CD14-positive monocyte (primary cell): ENCODE measurements at regions of chr3 and their contacts with region 1.

Region 1: GRCh38 chr3:5426094-5426883 is 238.8 kb downstream of the EDEM1 start:
- DNase-seq: peak; percentile 62 to 78 (median 75)
- H3K4me3 ChIP-seq: peak overlapping the region in 1 of 3 experiments; percentile 40
- H3K4me3 Mint-ChIP-seq: peak overlapping the region; percentile 25 to 70
- H3K27ac ChIP-seq: no peak overlapping the region
- H3K27ac Mint-ChIP-seq: peak overlapping the region in 6 of 7 donors; percentile 11 to 54 (median 31)
- H3K4me1 ChIP-seq: peaks cover 59 to 66% of the 10 kb centered on the region in 2 donors
- H3K4me1 Mint-ChIP-seq: peaks cover 70% of the 10 kb centered on the region
- H3K27me3 ChIP-seq: no peaks in the 10 kb centered on the region
- H3K27me3 Mint-ChIP-seq: peaks cover 2% of the 10 kb centered on the region in 3 donors
- CTCF ChIP-seq: peak; percentile 93

Region 2: GRCh38 chr3:5463991-5464390 is 37.7 kb after region 1 on chr3:
- intact Hi-C with region 1: loop called (anchors 5 kb)
- DNase-seq: peak; percentile 66 to 73 (median 72)
- H3K4me3 ChIP-seq: peak overlapping the region in 1 of 3 experiments; percentile 49
- H3K4me3 Mint-ChIP-seq: peak overlapping the region; percentile 22 to 75
- H3K27ac ChIP-seq: peak overlapping the region in 1 of 2 donors; percentile 79
- H3K27ac Mint-ChIP-seq: peak overlapping the region; percentile 66 to 97 (median 92)
- H3K4me1 ChIP-seq: peaks cover 43 to 48% of the 10 kb centered on the region in 2 donors
- H3K4me1 Mint-ChIP-seq: peaks cover 43% of the 10 kb centered on the region
- H3K27me3 ChIP-seq: no peaks in the 10 kb centered on the region
- H3K27me3 Mint-ChIP-seq: peaks cover 0 to 1% (median 0%) of the 10 kb centered on the region in 3 donors
- CTCF ChIP-seq: no peak

Region 3: DNA sequence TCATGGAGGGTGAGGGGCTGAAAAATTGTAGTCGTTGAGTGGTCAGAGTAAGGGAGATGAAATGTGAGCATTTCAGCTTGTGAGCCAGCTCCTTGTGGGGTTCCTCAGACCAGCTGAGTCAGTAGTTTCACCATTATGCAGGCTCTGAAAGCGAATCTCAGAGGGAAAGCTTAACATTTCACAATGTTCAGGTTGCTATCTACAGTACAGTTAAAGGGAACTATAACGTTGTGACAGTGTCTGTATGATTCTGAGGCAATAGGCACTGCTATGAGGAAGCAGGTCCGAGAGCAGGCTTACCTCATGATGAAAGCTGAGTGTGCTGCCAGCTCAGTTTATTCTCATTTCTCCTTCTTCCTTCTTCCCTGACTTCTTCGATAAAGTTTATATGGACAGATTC is 230.8 kb after region 1 on chr3:
- intact Hi-C with region 1: loop called in 1 of 2 experiments (anchors 5 kb)
- DNase-seq: peak; percentile 92 to 99 (median 98)
- H3K4me3 ChIP-seq: peak overlapping the region in 1 of 3 experiments; percentile 47
- H3K4me3 Mint-ChIP-seq: peak overlapping the region; percentile 17 to 79
- H3K27ac ChIP-seq: peak overlapping the region; percentile 25 to 91
- H3K27ac Mint-ChIP-seq: peak overlapping the region; percentile 91 to 98 (median 96)
- H3K4me1 ChIP-seq: peaks cover 23 to 28% of the 10 kb centered on the region in 2 donors
- H3K4me1 Mint-ChIP-seq: peaks cover 25% of the 10 kb centered on the region
- H3K27me3 ChIP-seq: no peaks in the 10 kb centered on the region
- H3K27me3 Mint-ChIP-seq: peaks cover 0 to 1% (median 0%) of the 10 kb centered on the region in 3 donors
- CTCF ChIP-seq: no peak

Region 4: GRCh38 chr3:5731094-5731493 is 304.8 kb after region 1 on chr3:
- intact Hi-C with region 1: loop called in 1 of 2 experiments (anchors 10 kb)
- DNase-seq: peak; percentile 7 to 36 (median 28)
- H3K4me3 ChIP-seq: no peak overlapping the region
- H3K4me3 Mint-ChIP-seq: no peak overlapping the region
- H3K27ac ChIP-seq: no peak overlapping the region
- H3K27ac Mint-ChIP-seq: no peak overlapping the region
- H3K4me1 ChIP-seq: no peaks in the 10 kb centered on the region
- H3K4me1 Mint-ChIP-seq: peaks cover 14% of the 10 kb centered on the region
- H3K27me3 ChIP-seq: no peaks in the 10 kb centered on the region
- H3K27me3 Mint-ChIP-seq: no peaks in the 10 kb centered on the region
- CTCF ChIP-seq: peak; percentile 64